Activated B cell treated with CpG ODN at 0.5 μM for 24 hours (primary cell): ENCODE measurements at regions of chr10 and their contacts with region 1.

Region 1: GRCh38 chr10:119395280-119395989 is 147.1 kb downstream of the RGS10 start:
- DNase-seq: peak; percentile 32
- ATAC-seq: peak; percentile 77
- H3K4me3 Mint-ChIP-seq: peak overlapping the region; percentile 60
- H3K27ac Mint-ChIP-seq: peak overlapping the region; percentile 91
- H3K4me1 Mint-ChIP-seq: peaks cover 44% of the 10 kb centered on the region
- H3K27me3 Mint-ChIP-seq: no peaks in the 10 kb centered on the region
- CTCF ChIP-seq: no peak

Region 2: GRCh38 chr10:119407254-119407777 is 11.9 kb after region 1 on chr10:
- CTCF ChIA-PET with region 1: no interaction called
- POLR2A ChIA-PET with region 1: interaction called, 11 read pairs
- intact Hi-C with region 1: no loop called
- DNase-seq: no peak
- ATAC-seq: peak; percentile 37
- H3K4me3 Mint-ChIP-seq: no peak overlapping the region
- H3K27ac Mint-ChIP-seq: peak overlapping the region; percentile 57
- H3K4me1 Mint-ChIP-seq: peaks cover 34% of the 10 kb centered on the region
- H3K27me3 Mint-ChIP-seq: no peaks in the 10 kb centered on the region
- CTCF ChIP-seq: no peak

Region 3: GRCh38 chr10:119431034-119431767 is 35.8 kb after region 1 on chr10:
- CTCF ChIA-PET with region 1: no interaction called
- POLR2A ChIA-PET with region 1: no interaction called
- intact Hi-C with region 1: no loop called
- DNase-seq: no peak
- ATAC-seq: no peak
- H3K4me3 Mint-ChIP-seq: no peak overlapping the region
- H3K27ac Mint-ChIP-seq: no peak overlapping the region
- H3K4me1 Mint-ChIP-seq: no peaks in the 10 kb centered on the region
- H3K27me3 Mint-ChIP-seq: no peaks in the 10 kb centered on the region
- CTCF ChIP-seq: no peak

Region 4: DNA sequence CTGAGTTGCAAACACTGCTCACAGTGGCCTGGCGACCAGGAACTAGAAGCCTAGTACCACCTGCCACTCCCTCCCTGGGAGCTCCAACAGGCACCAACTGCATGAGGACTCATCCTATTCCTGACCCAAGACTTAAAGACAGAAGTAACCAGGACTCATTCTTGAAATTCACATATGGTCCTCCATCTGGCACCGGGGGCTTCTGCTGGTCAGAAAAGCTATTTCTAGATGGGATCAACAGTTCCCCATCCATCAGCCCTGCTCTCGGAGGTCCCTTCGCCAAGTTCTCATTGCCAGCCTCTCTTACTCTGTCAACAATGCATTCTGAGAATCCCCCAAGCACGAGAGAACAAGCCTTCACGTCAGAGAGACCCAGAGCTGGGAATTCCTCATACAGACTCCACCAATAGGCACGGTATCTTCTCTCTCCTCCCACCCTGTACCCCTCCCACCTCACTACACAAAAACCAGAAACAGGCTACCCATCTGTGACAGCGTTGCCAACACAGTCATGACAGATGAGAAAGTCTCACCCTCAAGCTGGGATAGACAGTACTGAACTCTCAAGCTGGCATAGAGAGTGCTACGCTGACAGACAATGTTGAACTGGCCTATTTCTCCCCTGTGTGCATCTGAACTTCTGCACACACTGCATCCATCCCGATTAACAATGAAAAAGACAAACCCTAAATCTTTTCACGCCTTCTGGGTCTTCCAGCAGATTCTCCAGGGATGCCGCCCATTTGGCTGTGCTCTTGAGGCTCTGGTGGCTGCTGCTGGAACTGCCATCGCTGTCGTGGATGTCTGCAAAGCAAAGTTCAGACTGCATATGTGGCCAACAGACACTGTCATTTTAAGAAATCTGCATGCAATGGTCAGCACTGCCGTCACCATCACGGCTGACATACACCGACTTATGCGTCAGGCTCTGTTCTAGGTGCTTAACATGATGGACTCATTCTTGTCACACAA is 131.5 kb after region 1 on chr10:
- CTCF ChIA-PET with region 1: no interaction called
- POLR2A ChIA-PET with region 1: no interaction called
- intact Hi-C with region 1: no loop called
- DNase-seq: no peak
- ATAC-seq: peak; percentile 42
- H3K4me3 Mint-ChIP-seq: no peak overlapping the region
- H3K27ac Mint-ChIP-seq: no peak overlapping the region
- H3K4me1 Mint-ChIP-seq: peaks cover 3% of the 10 kb centered on the region
- H3K27me3 Mint-ChIP-seq: no peaks in the 10 kb centered on the region
- CTCF ChIP-seq: no peak

Region 5: DNA sequence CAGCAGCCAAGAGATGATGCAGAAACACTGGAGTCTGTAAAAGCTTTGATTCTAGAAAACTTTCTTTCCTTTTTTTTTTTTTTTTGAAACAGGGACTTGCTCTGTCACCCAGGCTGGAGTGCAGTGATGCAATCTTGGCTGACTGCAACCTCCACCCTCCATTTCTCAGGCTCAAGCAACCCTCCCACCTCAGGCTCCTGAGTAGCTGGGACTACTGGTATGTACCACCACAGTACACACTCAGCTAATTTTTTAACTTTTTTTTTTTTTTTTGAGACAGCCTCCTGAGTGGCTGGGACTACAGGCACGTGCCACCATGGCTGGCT is 238.7 kb after region 1 on chr10:
- CTCF ChIA-PET with region 1: no interaction called
- POLR2A ChIA-PET with region 1: no interaction called
- intact Hi-C with region 1: no loop called
- DNase-seq: no peak
- ATAC-seq: no peak
- H3K4me3 Mint-ChIP-seq: no peak overlapping the region
- H3K27ac Mint-ChIP-seq: no peak overlapping the region
- H3K4me1 Mint-ChIP-seq: no peaks in the 10 kb centered on the region
- H3K27me3 Mint-ChIP-seq: no peaks in the 10 kb centered on the region
- CTCF ChIP-seq: no peak